ENCODE measurements at regions of chr19 and their contacts with region 1.

Region 1: DNA sequence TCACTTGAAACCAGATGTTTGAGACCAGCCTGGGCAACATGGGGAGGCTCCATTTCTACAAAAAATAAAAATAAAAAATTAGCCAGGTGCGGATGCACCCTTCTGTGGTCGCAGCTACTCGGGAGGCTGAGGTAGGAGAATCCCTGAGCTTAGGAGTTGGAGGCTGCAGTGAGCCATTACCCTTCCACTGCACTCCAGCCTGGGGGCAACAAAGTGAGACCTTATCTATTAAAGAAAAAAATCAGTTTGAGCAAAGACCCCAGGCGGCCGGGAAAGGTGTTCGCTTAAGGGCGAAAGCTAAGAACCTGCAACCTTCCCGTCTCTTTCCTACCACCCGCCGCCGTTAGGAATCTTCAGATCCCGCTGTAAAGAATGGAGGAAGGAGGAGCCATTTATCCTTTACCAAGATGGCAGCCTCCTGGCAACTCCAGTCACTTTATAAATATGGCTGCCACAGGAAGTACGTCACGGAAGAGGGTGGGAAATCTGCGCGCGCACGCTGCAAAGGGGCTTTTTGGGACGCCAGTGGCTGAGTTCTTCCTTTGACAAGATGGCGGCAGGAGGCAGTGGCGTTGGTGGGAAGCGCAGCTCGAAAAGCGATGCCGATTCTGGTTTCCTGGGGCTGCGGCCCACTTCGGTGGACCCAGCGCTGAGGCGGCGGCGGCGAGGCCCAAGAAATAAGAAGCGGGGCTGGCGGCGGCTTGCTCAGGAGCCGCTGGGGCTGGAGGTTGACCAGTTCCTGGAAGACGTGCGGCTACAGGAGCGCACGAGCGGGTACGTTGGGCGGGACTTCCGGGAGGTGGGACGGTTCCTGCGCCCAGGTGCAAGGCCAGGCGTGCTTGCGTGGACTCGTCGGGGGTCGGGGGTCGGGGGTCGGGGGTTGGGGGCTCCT is at the start of gene NOP53:
- DNase-seq: peak; percentile 95 to 99 (median 97)
- ATAC-seq: peak; percentile 86
- H3K4me3 ChIP-seq: peak within 1 kb of the TSS; percentile 62
- H3K4me3 Mint-ChIP-seq: peak within 1 kb of the TSS; percentile 93 to 100 (median 99)
- H3K27ac ChIP-seq: peak within 1 kb of the TSS; percentile 100
- H3K27ac Mint-ChIP-seq: peak within 1 kb of the TSS; percentile 97 to 100 (median 100)
- H3K4me1 ChIP-seq: peaks cover 11 to 50% of the 10 kb centered on the region in 2 donors
- H3K4me1 Mint-ChIP-seq: peaks cover 18 to 58% (median 40%) of the 10 kb centered on the region in 7 donors
- H3K27me3 ChIP-seq: no peaks in the 10 kb centered on the region
- H3K27me3 Mint-ChIP-seq: peaks cover 0 to 3% (median 0%) of the 10 kb centered on the region in 5 donors
- total RNA-seq, gene NOP53: 316 to 1,143 (median 992) TPM

Region 2: GRCh38 chr19:46850228-46851203 is 894.7 kb before region 1 on chr19 and contains the start of gene AP2S1:
- CTCF ChIA-PET with region 1: no interaction called
- POLR2A ChIA-PET with region 1: no interaction called
- intact Hi-C with region 1: loop called in 1 of 2 experiments (anchors 2 kb)
- DNase-seq: peak; percentile 73 to 98 (median 93)
- ATAC-seq: peak; percentile 97
- H3K4me3 ChIP-seq: peak within 1 kb of the TSS; percentile 89
- H3K4me3 Mint-ChIP-seq: peak within 1 kb of the TSS; percentile 87 to 99 (median 93)
- H3K27ac ChIP-seq: peak within 1 kb of the TSS; percentile 79
- H3K27ac Mint-ChIP-seq: peak within 1 kb of the TSS; percentile 68 to 96 (median 83)
- H3K4me1 ChIP-seq: peaks cover 9 to 12% of the 10 kb centered on the region in 2 donors
- H3K4me1 Mint-ChIP-seq: peaks cover 20 to 34% (median 29%) of the 10 kb centered on the region in 7 donors
- H3K27me3 ChIP-seq: no peaks in the 10 kb centered on the region
- H3K27me3 Mint-ChIP-seq: peaks cover 0 to 3% (median 0%) of the 10 kb centered on the region in 5 donors
- total RNA-seq, gene AP2S1: 34.4 to 116 (median 46.5) TPM

Region 3: DNA sequence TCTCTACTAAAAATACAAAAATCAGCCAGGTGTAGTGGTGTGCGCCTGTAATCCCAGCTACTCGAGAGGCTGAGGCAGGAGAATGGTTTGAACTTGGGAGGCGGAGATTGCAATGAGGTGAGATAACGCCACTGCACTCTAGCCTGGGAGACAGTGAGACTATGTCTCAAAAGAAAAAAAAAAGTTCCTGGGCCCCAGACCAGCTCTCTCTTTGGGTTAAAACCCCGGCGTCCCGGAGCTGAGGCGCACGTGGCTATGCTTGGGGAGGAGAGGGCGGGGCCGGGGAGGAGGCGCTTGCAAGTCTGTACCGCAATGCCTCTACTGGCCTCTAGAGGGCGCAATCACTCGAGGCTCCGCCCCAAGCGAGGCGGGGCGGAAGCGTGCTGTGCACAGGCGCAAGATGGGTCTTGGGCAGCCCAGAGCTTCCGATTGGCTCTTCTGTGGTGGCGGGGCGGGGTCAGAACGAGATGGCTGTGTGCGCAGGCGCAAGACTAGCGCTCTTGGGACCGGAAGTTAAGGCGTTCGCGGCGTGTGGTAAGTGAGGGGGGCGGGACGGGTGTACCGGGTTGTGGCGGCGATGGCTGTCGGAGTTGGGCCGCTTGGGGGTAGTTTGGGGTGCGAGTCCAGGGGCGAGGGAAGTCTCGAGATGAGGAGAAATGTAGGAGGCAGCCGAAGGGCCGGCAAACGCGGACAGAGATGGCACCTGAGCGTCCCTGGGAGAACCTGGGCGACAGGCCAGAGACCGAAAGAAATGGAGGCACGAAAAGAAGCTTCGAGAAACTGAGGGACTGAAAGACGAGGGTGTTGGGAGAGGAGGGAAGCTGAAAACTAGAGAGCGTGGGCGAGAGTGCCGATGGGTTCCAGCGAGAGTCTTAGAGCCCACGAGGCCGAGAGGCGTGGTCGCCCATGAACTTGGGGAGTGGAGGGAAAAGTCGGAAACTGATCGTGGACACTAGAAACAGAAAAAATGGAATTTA is 396.1 kb before region 1 on chr19 and contains the start of gene DHX34:
- CTCF ChIA-PET with region 1: no interaction called
- POLR2A ChIA-PET with region 1: interaction called, 3 read pairs
- intact Hi-C with region 1: loop called in 1 of 2 experiments (anchors 1 kb)
- DNase-seq: peak; percentile 97 to 100 (median 99)
- ATAC-seq: peak; percentile 100
- H3K4me3 ChIP-seq: peak within 1 kb of the TSS; percentile 92
- H3K4me3 Mint-ChIP-seq: peak within 1 kb of the TSS; percentile 91 to 100 (median 97)
- H3K27ac ChIP-seq: peak within 1 kb of the TSS; percentile 83
- H3K27ac Mint-ChIP-seq: peak within 1 kb of the TSS; percentile 88 to 97 (median 95)
- H3K4me1 ChIP-seq: peaks cover 0 to 12% of the 10 kb centered on the region in 2 donors
- H3K4me1 Mint-ChIP-seq: peaks cover 19 to 46% (median 44%) of the 10 kb centered on the region in 7 donors
- H3K27me3 ChIP-seq: no peaks in the 10 kb centered on the region
- H3K27me3 Mint-ChIP-seq: peaks cover 0 to 3% (median 0%) of the 10 kb centered on the region in 5 donors
- total RNA-seq, gene DHX34: 15.6 to 31.6 (median 29.5) TPM

Region 4: GRCh38 chr19:47436712-47437401 is 308.4 kb before region 1 on chr19:
- CTCF ChIA-PET with region 1: interaction called, 7 read pairs
- POLR2A ChIA-PET with region 1: interaction called, 4 read pairs
- intact Hi-C with region 1: loop called (anchors 1 kb)
- DNase-seq: peak; percentile 67 to 91 (median 79)
- ATAC-seq: peak; percentile 98
- H3K4me3 ChIP-seq: no peak overlapping the region
- H3K4me3 Mint-ChIP-seq: peak overlapping the region in 8 of 10 donors; percentile 17 to 72 (median 36)
- H3K27ac ChIP-seq: no peak overlapping the region
- H3K27ac Mint-ChIP-seq: peak overlapping the region in 6 of 9 donors; percentile 12 to 87 (median 55)
- H3K4me1 ChIP-seq: no peaks in the 10 kb centered on the region
- H3K4me1 Mint-ChIP-seq: peaks cover 18 to 32% (median 20%) of the 10 kb centered on the region in 7 donors
- H3K27me3 ChIP-seq: no peaks in the 10 kb centered on the region
- H3K27me3 Mint-ChIP-seq: peaks cover 21 to 55% (median 45%) of the 10 kb centered on the region in 5 donors

Region 5: GRCh38 chr19:47514869-47515588 is 230.2 kb before region 1 on chr19 and contains the start of gene NAPA:
- CTCF ChIA-PET with region 1: no interaction called
- POLR2A ChIA-PET with region 1: no interaction called
- intact Hi-C with region 1: loop called (anchors 1 kb)
- DNase-seq: peak; percentile 99 to 100 (median 100)
- ATAC-seq: peak; percentile 96
- H3K4me3 ChIP-seq: peak within 1 kb of the TSS; percentile 97
- H3K4me3 Mint-ChIP-seq: peak within 1 kb of the TSS; percentile 81 to 100 (median 98)
- H3K27ac ChIP-seq: peak within 1 kb of the TSS; percentile 100
- H3K27ac Mint-ChIP-seq: peak within 1 kb of the TSS; percentile 81 to 99 (median 98)
- H3K4me1 ChIP-seq: peaks cover 50 to 64% of the 10 kb centered on the region in 2 donors
- H3K4me1 Mint-ChIP-seq: peaks cover 64 to 97% (median 92%) of the 10 kb centered on the region in 7 donors
- H3K27me3 ChIP-seq: no peaks in the 10 kb centered on the region
- H3K27me3 Mint-ChIP-seq: peaks cover 0 to 6% (median 0%) of the 10 kb centered on the region in 5 donors
- total RNA-seq, gene NAPA: 86.2 to 136 (median 107) TPM

Region 6: DNA sequence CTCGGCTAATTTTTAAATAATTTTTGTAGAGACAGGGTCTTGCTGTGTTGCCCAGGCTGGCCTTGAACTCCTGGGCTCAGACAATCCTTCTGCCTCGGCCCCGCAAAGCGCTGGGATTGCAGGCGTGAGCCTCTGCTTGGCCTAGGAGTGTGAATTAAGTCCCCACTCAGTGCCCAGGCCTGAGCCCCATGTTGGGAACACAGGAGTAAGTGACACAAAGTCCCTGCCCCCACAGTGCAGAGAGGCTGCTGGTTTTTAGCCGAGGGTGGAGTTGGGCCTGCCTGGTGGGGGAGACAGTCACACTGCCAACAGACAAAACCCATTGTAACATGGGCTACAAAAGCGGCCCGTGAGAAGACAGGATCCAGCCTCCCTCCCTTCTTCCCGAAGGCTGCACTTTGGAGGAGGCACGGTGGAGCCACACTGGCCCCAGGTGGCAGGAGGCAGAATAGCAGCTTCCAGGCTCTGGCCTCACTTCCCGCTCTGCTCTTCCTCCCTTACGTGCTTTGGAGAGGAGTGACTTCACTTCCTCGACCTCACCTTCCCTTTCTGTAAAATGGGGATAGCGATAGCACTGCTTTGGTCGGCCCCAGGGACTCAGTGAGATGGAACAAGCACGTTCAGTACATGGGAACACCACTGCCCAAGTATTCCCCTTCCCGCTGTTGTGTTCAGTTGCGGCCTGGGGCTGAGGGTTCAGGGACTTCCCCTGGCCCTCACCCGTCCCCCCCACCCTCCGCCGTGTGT is 47.2 kb before region 1 on chr19:
- CTCF ChIA-PET with region 1: interaction called, 4 read pairs
- POLR2A ChIA-PET with region 1: no interaction called
- intact Hi-C with region 1: loop called (anchors 1 to 5 kb)
- DNase-seq: peak; percentile 10 to 59 (median 41)
- ATAC-seq: peak; percentile 76
- H3K4me3 ChIP-seq: no peak overlapping the region
- H3K4me3 Mint-ChIP-seq: no peak overlapping the region
- H3K27ac ChIP-seq: no peak overlapping the region
- H3K27ac Mint-ChIP-seq: peak overlapping the region in 2 of 9 donors; percentile 9 to 12
- H3K4me1 ChIP-seq: no peaks in the 10 kb centered on the region
- H3K4me1 Mint-ChIP-seq: peaks cover 0 to 6% (median 3%) of the 10 kb centered on the region in 7 donors
- H3K27me3 ChIP-seq: no peaks in the 10 kb centered on the region
- H3K27me3 Mint-ChIP-seq: no peaks in the 10 kb centered on the region

Region 7: DNA sequence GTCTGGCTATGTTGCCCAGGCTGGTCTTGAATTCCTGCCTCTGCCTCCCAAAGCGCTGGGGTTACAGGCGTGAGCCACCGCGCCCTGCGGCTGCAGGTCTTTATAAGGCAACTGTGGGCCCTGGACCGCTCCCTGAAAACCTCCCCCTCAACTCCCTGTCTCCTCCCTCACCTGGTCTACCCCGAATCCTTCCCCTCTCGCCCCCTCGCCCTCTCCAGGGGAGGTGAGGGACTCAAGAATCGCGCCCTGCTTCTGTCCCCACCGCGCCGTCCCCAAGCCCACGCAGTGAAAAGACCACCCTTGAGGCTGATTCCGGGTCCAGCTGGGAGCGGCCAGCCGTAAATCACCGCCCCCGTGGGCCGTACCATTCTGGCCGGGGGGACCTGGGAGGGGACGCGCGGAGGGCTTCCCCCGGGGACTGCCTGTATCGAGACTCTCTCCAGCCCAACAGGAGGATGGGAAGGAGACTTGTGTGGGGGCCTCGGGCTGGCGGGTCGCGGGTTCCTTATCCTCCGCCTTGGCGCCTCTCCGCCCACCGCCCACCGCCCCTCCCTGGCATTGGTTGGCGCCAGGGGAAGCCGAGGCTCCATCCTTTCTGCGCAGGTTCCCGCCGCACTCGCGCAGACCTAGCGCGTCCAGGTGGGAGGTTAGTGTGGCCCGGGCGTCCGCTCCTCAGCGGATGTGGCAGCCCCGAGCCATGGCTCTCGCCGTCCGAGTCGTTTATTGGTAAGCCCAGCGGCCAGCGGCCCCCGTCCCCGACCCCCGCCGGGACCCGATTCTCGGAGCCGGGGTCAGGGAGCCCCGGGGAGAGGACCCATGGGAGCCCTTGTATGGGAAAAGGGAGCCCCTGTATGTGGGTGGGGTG is 33.1 kb after region 1 on chr19 and contains the start of gene SELENOW:
- CTCF ChIA-PET with region 1: no interaction called
- POLR2A ChIA-PET with region 1: interaction called, 7 read pairs
- intact Hi-C with region 1: loop called (anchors 1 kb)
- DNase-seq: peak; percentile 56 to 86 (median 76)
- ATAC-seq: peak; percentile 95
- H3K4me3 ChIP-seq: peak within 1 kb of the TSS; percentile 88
- H3K4me3 Mint-ChIP-seq: peak within 1 kb of the TSS; percentile 84 to 99 (median 93)
- H3K27ac ChIP-seq: peak within 1 kb of the TSS; percentile 87
- H3K27ac Mint-ChIP-seq: peak within 1 kb of the TSS; percentile 70 to 96 (median 91)
- H3K4me1 ChIP-seq: peaks cover 8 to 19% of the 10 kb centered on the region in 2 donors
- H3K4me1 Mint-ChIP-seq: peaks cover 8 to 40% (median 32%) of the 10 kb centered on the region in 7 donors
- H3K27me3 ChIP-seq: no peaks in the 10 kb centered on the region
- H3K27me3 Mint-ChIP-seq: no peaks in the 10 kb centered on the region
- total RNA-seq, gene SELENOW: 67.5 to 116 (median 101) TPM

Region 8: DNA sequence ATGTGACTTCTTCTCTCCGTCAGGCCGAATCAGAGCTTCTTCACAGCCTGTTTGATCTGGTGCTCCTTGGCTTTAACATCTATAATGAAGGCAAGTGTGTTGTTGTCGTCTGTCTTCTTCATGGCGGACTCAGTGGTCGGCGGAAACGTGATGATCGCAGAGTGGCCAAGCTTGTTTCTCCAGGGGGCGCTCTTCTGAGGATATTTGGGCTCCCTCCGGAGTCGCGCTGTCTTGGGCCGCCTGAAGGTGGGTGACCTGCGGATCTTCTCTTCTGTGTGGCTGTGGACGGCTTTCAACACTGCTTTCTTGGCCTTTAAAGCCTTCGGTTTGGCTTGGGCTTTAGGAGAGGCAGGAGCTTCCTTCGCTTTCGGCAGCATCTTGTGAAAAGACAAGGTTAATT is 49.3 kb after region 1 on chr19:
- CTCF ChIA-PET with region 1: no interaction called
- POLR2A ChIA-PET with region 1: no interaction called
- intact Hi-C with region 1: no loop called
- DNase-seq: no peak
- ATAC-seq: no peak
- H3K4me3 ChIP-seq: no peak overlapping the region
- H3K4me3 Mint-ChIP-seq: no peak overlapping the region
- H3K27ac ChIP-seq: no peak overlapping the region
- H3K27ac Mint-ChIP-seq: no peak overlapping the region
- H3K4me1 ChIP-seq: no peaks in the 10 kb centered on the region
- H3K4me1 Mint-ChIP-seq: peaks cover 0 to 3% (median 0%) of the 10 kb centered on the region in 7 donors
- H3K27me3 ChIP-seq: no peaks in the 10 kb centered on the region
- H3K27me3 Mint-ChIP-seq: peaks cover 0 to 10% (median 4%) of the 10 kb centered on the region in 5 donors

Region 9: DNA sequence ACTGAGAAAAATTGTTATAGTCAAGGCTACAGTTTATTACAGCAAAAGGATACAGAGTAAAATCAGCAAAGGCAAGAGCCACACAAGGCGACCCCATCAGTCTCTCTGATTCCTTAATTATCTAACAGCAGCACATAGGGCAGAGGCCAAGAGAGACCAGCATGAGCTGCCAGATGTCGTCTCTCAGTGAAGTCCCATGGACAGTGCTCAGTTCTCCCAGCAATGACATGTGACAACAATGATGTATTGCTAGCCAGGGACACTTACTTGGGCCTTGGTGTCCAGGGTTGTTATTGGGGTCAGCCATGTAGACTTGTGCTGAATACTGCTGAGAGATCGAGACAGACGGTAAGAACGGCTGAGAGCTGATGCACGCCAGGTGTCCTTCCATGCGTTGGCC is 447.5 kb after region 1 on chr19:
- CTCF ChIA-PET with region 1: no interaction called
- POLR2A ChIA-PET with region 1: no interaction called
- intact Hi-C with region 1: no loop called
- DNase-seq: no peak
- ATAC-seq: no peak
- H3K4me3 ChIP-seq: no peak overlapping the region
- H3K4me3 Mint-ChIP-seq: no peak overlapping the region
- H3K27ac ChIP-seq: no peak overlapping the region
- H3K27ac Mint-ChIP-seq: peak overlapping the region in 1 of 9 donors; percentile 5
- H3K4me1 ChIP-seq: no peaks in the 10 kb centered on the region
- H3K4me1 Mint-ChIP-seq: peaks cover 0 to 18% (median 6%) of the 10 kb centered on the region in 7 donors
- H3K27me3 ChIP-seq: no peaks in the 10 kb centered on the region
- H3K27me3 Mint-ChIP-seq: no peaks in the 10 kb centered on the region

Measured in naive thymus-derived CD4-positive, alpha-beta T cell (primary cell).